Posterior vena cava (tissue), 2 donors: ENCODE measurements at regions of chr3 and their contacts with region 1.

Region 1: DNA sequence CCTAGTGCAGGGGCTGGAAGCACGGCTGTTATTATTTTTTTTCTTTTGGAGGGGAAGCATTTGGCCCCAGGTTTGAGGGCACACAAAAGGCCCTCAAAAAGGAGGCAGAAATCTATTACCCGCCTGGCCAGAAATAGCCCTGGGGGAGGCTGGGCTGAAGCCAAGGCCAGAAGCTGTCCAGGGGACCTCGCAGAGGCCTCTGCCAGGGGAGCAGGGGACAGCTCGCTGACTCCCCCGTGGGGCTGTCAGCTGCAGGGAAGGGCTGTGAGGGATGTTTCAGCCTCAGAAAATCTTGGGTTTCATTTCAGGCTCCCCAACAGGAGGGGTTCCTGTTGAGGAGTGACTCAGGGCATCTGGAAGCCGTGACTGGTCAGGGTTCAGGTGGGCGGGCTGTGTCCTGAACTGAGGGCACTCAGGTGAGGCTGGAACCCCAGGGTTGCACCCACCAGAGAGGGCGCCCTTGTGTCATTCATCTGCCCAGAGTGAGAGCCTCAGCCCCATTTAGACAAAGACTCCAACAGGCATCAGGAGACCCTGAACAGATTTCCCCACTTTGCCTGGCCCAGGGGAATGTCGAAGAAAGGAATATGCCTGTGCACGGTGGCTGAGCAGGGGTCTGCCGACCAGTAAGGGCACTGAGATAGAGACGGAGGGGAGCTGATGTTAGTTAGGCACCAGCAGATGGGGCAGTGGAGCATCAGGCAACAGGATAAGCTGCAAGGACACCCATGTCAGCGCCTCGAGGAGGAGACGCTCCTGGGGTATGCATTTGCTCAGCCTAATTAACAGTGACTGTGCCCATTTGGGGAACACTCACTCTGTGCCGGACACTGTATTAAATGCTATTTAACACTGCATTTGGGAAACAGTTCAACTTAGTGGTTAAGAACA is 43.5 kb upstream of the SLC6A11 start:
- DNase-seq: no peak

Region 2: GRCh38 chr3:8837162-8837561 is 1935.4 kb before region 1 on chr3:
- intact Hi-C with region 1: loop called in 1 of 2 experiments (anchors 10 kb)
- DNase-seq: no peak

Region 3: DNA sequence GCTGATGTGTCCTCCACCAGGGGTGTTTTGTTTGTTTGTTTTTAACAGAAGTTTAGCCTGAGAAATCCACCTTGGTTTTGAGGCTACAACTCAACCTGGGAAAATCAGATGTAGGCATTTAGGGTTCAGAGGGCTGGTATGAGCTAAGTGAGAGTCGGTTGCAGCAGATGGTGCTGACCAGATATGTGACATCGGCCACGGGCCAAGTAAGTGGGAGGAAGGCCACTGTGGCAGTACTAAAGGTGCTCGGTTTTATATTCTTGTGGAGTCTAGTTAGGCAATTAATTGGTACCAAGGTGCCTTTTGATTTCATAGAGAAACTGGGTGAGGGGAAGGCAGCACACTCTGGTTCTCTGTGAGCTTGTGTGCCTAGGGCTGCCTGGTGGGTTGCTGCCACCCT is 1112.7 kb before region 1 on chr3:
- intact Hi-C with region 1: loop called in 1 of 2 experiments (anchors 5 kb)
- DNase-seq: no peak

Region 4: DNA sequence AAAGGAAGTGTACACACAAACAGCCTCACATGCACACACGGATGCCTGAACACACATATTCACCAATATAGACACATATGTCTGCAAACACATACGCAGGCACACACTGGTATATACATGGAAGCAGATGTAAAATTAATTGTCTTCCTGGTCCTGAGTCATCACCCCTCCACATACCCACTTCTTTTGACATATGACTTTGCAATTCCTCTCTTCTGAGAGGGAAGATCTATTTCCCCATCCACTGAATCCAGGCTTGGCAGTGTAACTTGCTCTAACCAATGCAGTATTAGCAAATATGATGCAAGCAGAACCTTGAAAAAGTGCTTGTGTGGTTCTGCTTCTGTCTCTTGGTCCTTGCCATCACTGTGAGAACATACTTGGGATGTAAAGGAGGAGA is 304.9 kb after region 1 on chr3:
- intact Hi-C with region 1: no loop called
- DNase-seq: no peak